ENCODE measurements at regions of chr16 and their contacts with region 1.

Region 1: DNA sequence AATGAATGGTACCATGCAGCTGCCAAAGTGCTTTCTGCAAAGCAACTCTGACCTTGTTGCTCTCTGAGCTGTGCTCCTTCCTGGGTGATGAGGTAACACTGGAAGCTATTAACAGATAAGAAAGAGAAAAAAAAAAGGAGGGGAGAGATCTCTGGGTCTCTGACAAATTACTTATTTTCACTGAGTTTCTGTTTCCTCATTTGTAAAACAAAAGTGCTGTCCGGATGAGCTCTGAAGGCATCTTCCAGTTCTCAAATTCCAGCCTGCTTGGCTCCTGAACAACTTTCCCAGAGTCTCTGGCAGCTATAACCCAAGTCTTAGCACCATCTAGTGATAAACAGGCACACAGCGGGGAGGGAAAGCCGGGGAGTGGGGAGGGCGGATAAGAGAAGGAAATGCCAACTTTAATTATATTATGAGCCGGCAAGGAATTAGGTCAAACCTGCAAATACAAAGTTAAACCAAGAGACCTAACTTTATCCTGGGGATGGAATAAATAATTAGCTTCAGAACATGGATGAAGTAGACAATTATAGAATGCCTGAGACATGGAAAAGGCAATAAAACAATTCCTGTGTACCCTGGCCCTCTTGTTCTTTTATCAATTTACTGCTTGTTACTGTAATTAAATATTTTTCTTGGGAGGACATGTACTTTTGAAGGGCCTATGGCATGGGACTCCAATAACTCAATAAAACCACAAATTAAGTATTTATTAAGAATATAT is 61.3 kb upstream of the KIFC3 start:
- DNase-seq: peak; percentile 65 to 86
- ATAC-seq: peak; percentile 89 to 90
- H3K4me3 ChIP-seq: peak overlapping the region; percentile 51
- H3K27ac ChIP-seq: peak overlapping the region; percentile 93 to 95
- H3K4me1 ChIP-seq: peaks cover 83% of the 10 kb centered on the region
- CTCF ChIP-seq: peak; percentile 72
- EP300 ChIP-seq: no peak
- POLR2A ChIP-seq: no peak
- RAD21 ChIP-seq: peak; percentile 88 to 89

Region 2: GRCh38 chr16:57781741-57782606 is 81.6 kb before region 1 on chr16:
- CTCF ChIA-PET with region 1: interaction called, 12 read pairs
- POLR2A ChIA-PET with region 1: no interaction called
- DNase-seq: no peak
- ATAC-seq: 0 out of 6 replicates have a peak, but pooled peaks have one; percentile 4 to 17
- H3K4me3 ChIP-seq: no peak overlapping the region
- H3K27ac ChIP-seq: peak overlapping the region; percentile 40 to 76; a peak in 4 of 6 replicates
- H3K4me1 ChIP-seq: peaks cover 76% of the 10 kb centered on the region
- CTCF ChIP-seq: no peak
- EP300 ChIP-seq: no peak
- POLR2A ChIP-seq: no peak
- RAD21 ChIP-seq: no peak

Region 3: GRCh38 chr16:57810197-57811031 is 53.2 kb before region 1 on chr16:
- CTCF ChIA-PET with region 1: interaction called, 164 read pairs
- POLR2A ChIA-PET with region 1: interaction called, 8 read pairs
- DNase-seq: peak; percentile 94 to 98
- ATAC-seq: peak; percentile 71 to 81
- H3K4me3 ChIP-seq: peak overlapping the region; percentile 4; the same call in 1 of the 3 replicates
- H3K27ac ChIP-seq: peak overlapping the region; percentile 91 to 97
- H3K4me1 ChIP-seq: peaks cover 84% of the 10 kb centered on the region
- CTCF ChIP-seq: no peak
- EP300 ChIP-seq: peak; percentile 90 to 91
- POLR2A ChIP-seq: peak; percentile 56
- RAD21 ChIP-seq: peak; percentile 3 to 51; a peak in 3 of 5 replicates

Region 4: DNA sequence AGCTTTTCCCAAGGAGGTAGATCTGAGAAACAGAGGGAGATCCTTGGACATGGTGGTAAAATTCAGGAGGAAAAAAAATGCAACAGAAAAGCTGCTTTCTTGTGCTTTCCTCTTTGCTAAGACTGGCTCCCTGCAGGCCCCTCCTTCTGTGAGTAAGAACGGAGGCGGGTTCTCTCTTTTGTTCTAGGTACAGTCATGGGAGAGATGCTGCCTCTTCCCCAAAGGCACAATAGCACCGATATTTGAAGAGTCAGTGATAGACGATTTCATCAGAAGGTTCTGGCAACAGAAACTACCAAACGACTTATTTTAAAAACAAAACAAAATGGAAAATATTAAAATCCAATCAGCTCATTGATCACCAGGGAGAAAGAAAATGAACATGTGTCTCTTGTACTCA is 28.7 kb before region 1 on chr16:
- CTCF ChIA-PET with region 1: interaction called, 21 read pairs
- POLR2A ChIA-PET with region 1: no interaction called
- DNase-seq: peak; percentile 54 to 64
- ATAC-seq: peak; percentile 77 to 84; a peak in 5 of 6 replicates
- H3K4me3 ChIP-seq: no peak overlapping the region
- H3K27ac ChIP-seq: peak overlapping the region; percentile 13 to 84
- H3K4me1 ChIP-seq: peaks cover 38% of the 10 kb centered on the region
- CTCF ChIP-seq: no peak
- EP300 ChIP-seq: no peak
- POLR2A ChIP-seq: no peak
- RAD21 ChIP-seq: no peak

Region 5: DNA sequence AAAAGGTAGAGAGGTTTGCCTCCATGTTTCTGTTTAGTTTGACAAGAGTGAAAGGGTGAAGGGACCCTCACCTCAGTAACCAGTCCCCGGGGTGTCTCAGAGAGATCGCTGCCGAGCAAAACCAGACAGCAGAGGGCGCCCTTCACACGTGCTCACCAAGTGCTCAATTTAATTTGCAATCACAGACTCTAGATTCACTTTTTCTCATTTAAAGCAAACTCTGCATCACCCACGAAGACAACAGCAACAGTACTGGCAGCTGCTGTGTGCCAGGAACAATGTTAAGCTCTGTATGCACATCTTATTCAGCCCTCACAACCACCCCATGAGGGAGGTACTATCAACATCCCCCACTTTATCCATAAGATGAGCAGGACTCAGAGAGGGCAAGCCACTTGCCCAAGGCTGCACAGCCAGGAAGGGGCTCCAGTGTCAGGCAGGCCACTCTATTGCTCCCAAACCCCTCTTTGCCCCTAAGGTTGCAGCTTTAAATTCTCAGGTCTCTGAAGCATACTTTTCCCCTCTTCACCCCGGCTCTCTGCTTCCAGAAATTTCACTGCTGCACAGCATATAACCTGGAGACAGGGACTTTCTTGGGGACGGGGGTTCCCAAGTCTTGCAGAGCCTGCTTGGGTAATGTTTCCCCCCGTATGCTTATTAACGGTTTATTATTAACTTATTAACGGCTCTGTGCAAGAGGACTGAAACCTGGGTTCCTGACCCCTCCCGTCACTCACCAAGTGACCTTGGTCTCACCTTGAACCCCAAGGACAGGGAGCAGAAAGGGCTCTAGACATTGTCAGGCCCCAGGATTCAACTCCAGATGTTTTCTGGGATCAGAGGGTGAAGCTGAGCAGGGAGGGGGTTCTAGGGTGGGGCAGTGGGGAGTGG is 36.4 kb after region 1 on chr16:
- CTCF ChIA-PET with region 1: interaction called, 10 read pairs
- POLR2A ChIA-PET with region 1: no interaction called
- DNase-seq: peak; percentile 66 to 74
- ATAC-seq: peak; percentile 81 to 82
- H3K4me3 ChIP-seq: no peak overlapping the region
- H3K27ac ChIP-seq: peak overlapping the region; percentile 53 to 94
- H3K4me1 ChIP-seq: peaks cover 39% of the 10 kb centered on the region
- CTCF ChIP-seq: peak; percentile 97
- EP300 ChIP-seq: no peak
- POLR2A ChIP-seq: no peak
- RAD21 ChIP-seq: peak; percentile 93

Region 6: DNA sequence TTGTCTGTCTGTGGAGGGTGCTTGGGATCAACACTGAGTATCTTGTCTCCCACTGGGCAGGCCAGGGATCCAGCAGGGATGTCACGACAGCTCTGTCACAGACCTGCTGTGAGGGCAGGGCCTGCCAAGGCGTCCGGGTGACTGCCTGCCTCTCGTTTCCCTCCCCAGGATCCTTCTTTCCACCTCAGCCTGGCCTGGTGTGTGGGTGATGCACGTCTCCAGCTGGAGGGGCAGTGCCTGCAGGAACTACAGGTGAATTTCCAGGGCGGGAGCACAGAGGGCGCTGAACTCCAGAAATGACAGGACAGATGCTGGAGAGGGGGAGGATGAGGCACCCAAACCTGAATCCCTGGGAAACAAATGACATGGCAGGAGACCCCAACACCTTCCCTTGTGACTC is 155.2 kb after region 1 on chr16:
- CTCF ChIA-PET with region 1: no interaction called
- POLR2A ChIA-PET with region 1: no interaction called
- DNase-seq: no peak
- ATAC-seq: peak in 1 of 2 experiments; percentile 41; a peak in 2 of 6 replicates
- H3K4me3 ChIP-seq: no peak overlapping the region
- H3K27ac ChIP-seq: no peak overlapping the region
- H3K4me1 ChIP-seq: peaks cover 13% of the 10 kb centered on the region; the same call in 1 of the 3 replicates
- CTCF ChIP-seq: 0 out of 3 replicates have a peak, but pooled peaks have one; percentile 6
- EP300 ChIP-seq: no peak
- POLR2A ChIP-seq: no peak
- RAD21 ChIP-seq: no peak